AG04450 (cell line): ENCODE measurements at regions of chr5 and their contacts with region 1.

Region 1: GRCh38 chr5:130109152-130109551 is 204.9 kb downstream of the CHSY3 start:
- DNase-seq: no peak
- H3K4me3 ChIP-seq: no peak overlapping the region
- H3K27ac ChIP-seq: no peak overlapping the region
- H3K27me3 ChIP-seq: no peaks in the 10 kb centered on the region
- CTCF ChIP-seq: peak; percentile 68

Region 2: DNA sequence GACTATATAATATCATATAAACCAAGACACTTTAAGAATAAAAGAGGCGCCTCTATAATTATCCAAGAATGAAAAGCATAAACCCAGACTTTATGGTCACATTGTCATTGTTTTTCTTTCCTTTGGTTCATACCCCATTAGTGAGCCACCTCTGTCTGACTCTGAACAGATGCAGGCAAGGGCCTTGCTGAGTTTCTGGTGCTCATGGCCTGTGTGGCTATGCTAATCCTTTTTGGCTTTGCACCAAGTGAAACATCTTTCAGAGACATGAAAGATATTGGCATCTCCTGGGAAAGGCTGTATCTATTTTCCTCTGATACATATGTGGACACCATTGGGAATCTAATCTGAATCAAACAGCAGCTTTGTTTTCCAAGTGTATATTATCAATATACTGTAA is 17.6 kb after region 1 on chr5:
- CTCF ChIA-PET with region 1: interaction called, 13 read pairs
- POLR2A ChIA-PET with region 1: no interaction called
- DNase-seq: no peak
- H3K4me3 ChIP-seq: no peak overlapping the region
- H3K27ac ChIP-seq: no peak overlapping the region
- H3K27me3 ChIP-seq: no peaks in the 10 kb centered on the region
- CTCF ChIP-seq: no peak

Region 3: GRCh38 chr5:130135506-130135905 is 26.4 kb after region 1 on chr5:
- CTCF ChIA-PET with region 1: interaction called, 33 read pairs
- POLR2A ChIA-PET with region 1: no interaction called
- DNase-seq: no peak
- H3K4me3 ChIP-seq: no peak overlapping the region
- H3K27ac ChIP-seq: no peak overlapping the region
- H3K27me3 ChIP-seq: no peaks in the 10 kb centered on the region
- CTCF ChIP-seq: no peak

Region 4: DNA sequence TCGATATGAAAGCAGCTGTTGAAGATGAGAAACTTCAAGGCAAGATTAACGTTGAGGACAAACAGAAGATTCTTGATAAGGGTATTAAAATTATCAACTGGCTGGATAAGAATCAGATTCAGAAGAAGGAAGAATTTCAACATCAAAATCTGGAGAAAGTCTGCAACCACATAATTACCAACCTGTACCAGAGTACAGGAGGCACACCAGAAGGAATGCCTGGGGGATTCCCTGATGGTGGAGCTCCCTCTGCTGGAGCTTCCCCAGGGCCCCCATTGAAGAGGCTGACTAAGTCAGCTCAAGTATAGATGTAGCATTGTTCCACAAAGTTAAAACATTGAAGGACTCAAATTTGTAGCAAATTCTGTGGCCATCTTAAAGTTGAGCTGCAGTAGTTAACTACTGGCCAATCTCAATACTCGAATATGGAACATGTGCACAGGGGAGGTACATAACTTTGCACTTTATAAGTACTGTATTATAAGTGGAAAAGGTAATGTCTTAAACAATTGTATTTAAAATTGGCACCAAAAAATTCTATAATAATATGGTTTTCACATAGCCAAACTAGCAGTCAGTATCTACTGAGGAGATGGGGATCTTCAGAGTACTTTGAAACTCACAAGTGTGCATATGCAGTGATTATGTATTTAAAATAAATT is 32.6 kb after region 1 on chr5:
- CTCF ChIA-PET with region 1: interaction called, 33 read pairs
- POLR2A ChIA-PET with region 1: no interaction called
- DNase-seq: peak; percentile 10
- H3K4me3 ChIP-seq: no peak overlapping the region
- H3K27ac ChIP-seq: no peak overlapping the region
- H3K27me3 ChIP-seq: no peaks in the 10 kb centered on the region
- CTCF ChIP-seq: peak; percentile 88